Transverse colon (tissue), 4 donors: ENCODE measurements at regions of chr22 and their contacts with region 1.

Region 1: GRCh38 chr22:24247011-24247507 is 2.2 kb upstream of the GGT5 start:
- DNase-seq: no peak
- H3K4me3 ChIP-seq: no peak overlapping the region
- H3K27ac ChIP-seq: peak overlapping the region; percentile 75 to 88 (median 82)
- H3K4me1 ChIP-seq: peaks cover 8 to 26% (median 9%) of the 10 kb centered on the region in 4 donors
- H3K27me3 ChIP-seq: no peaks in the 10 kb centered on the region
- CTCF ChIP-seq: no peak
- EP300 ChIP-seq: no peak
- POLR2A ChIP-seq: no peak

Region 2: DNA sequence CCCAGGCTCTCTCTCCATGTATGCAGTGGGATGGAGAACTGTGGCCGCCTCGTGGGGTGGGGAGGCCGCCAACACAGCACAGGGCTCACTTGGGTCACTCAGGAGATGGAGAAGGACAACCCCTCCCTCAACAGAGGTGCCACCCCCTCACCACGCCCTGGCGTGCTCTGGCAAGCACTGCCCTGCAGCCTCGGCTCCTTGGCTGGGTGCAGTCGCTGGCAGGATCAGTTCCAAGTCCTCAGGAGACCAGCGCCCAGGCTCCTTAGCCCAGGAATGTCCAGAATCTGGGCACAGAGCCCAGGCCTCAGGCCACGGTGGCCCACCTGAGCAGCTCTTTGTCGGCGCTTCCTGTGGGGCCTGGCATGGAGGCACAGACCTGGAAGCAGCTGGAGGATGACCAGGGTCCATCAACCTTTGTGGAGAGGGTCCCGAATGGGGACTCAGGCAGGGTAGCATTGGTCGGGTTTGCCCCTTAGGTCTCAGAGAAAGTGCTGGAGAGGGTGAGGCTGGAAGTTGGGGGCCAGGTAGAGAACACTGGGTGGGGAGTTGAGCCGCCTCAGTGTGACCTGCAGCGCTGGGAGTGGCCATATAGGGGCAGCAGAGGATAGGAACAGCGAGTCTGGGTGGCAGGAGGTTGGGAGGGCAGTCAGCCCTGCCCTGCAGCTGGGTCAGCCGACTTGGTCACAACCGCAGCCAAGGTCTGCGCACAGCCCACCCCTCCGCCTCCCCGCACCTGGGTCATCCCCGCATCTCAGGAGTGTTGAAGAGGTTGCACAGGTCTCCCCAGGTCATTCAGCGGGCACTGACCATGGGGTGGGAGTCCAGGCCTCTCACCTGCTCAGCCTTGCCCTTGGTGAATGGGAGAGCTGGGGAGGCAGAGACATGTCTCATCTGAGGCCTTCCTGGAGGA is 57.6 kb before region 1 on chr22:
- in situ Hi-C with region 1: no loop called
- intact Hi-C with region 1: loop called (anchors 5 kb)
- DNase-seq: peak; percentile 73
- H3K4me3 ChIP-seq: no peak overlapping the region
- H3K27ac ChIP-seq: no peak overlapping the region
- H3K4me1 ChIP-seq: peaks cover 0 to 7% (median 5%) of the 10 kb centered on the region in 4 donors
- H3K27me3 ChIP-seq: no peaks in the 10 kb centered on the region
- CTCF ChIP-seq: peak; percentile 82 to 93 (median 87)
- EP300 ChIP-seq: no peak
- POLR2A ChIP-seq: no peak

Region 3: DNA sequence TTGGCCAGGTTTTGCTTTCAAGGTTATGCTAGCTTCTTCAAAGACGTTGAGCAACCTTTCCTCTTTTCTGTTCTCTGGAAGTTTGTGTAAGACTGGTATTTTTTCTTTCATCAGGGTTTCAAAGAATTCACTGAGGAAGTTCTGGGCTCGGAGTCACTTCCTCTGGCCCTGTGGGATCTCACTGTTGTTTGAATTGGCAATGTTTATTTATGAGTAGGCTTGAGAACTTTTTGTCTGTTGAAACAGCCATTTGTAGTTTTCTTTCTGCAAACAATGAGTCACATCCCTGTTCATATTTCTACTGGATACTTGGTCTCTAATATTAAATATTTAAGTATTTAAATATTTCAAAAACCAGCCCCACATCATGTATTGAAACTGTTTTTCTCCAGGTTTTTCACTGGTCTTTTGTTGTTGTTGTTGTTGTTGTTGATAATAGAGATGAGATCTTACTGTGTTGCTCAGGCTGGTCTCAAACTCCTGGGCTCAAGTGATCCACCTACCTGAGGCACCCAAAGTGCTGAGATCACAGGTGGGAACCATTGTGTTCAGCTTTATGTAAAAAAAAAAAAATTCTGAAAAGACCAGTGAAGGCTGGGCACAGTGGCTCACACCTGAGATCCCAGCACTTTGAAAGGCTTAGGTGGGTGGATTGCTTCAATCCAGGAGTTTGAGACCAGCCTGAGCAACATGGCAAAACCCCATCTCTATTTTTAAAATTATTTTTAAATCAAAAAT is 38.9 kb before region 1 on chr22:
- in situ Hi-C with region 1: no loop called
- intact Hi-C with region 1: loop called (anchors 5 kb)
- DNase-seq: no peak
- H3K4me3 ChIP-seq: no peak overlapping the region
- H3K27ac ChIP-seq: peak overlapping the region; percentile 60 to 83 (median 79)
- H3K4me1 ChIP-seq: peaks cover 0 to 25% (median 15%) of the 10 kb centered on the region in 4 donors
- H3K27me3 ChIP-seq: no peaks in the 10 kb centered on the region
- CTCF ChIP-seq: no peak
- EP300 ChIP-seq: no peak
- POLR2A ChIP-seq: no peak